ENCODE measurements at regions of chr3 and their contacts with region 1.

Region 1: DNA sequence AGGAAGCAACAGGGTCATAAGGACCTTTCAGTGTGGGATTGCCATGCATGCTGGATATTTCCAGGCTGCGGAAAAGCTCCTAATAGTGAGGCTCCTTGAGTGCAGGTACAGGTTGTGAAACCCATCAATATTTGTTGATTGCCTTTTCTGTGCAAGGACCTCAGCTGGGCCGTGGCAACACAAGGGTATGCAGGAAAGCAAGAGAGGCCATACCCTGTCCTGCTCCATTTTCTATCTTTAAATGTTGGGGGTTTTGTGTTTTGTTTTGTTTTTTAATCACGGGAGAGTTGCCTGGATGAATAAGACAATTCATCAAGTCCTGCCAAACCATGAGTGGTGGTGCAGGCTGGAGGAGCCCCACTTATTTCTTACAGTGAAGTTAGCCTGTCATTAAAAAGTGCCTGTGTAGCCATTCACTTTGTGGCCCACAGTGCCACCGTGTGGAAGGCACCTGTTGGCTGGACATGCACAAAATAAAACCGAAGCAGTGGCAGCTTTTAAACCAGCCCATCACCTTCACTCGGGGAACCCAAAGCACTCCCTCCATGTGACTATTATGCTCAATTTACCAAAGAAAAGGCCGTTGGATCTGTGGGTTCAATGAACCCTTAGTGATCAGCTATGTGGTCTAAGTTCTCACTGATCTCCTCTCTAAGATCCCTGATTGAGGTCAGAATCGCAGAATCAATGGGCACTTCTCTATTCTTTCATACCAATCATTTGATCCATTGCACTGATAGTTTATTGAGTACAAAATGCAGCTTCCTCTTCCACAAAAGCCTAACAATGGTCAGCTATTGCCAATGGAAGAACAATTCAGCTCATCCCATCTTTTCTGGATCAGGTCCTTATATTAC is 42.2 kb downstream of the CLDN18 start:
- DNase-seq: peak; percentile 34
- H3K4me3 ChIP-seq: no peak overlapping the region
- H3K27ac ChIP-seq: no peak overlapping the region
- H3K4me1 ChIP-seq: no peaks in the 10 kb centered on the region; a peak in 1 of 4 replicates
- H3K27me3 ChIP-seq: no peaks in the 10 kb centered on the region
- CTCF ChIP-seq: peak; percentile 72
- EP300 ChIP-seq: no peak
- RAD21 ChIP-seq: peak; percentile 70

Region 2: DNA sequence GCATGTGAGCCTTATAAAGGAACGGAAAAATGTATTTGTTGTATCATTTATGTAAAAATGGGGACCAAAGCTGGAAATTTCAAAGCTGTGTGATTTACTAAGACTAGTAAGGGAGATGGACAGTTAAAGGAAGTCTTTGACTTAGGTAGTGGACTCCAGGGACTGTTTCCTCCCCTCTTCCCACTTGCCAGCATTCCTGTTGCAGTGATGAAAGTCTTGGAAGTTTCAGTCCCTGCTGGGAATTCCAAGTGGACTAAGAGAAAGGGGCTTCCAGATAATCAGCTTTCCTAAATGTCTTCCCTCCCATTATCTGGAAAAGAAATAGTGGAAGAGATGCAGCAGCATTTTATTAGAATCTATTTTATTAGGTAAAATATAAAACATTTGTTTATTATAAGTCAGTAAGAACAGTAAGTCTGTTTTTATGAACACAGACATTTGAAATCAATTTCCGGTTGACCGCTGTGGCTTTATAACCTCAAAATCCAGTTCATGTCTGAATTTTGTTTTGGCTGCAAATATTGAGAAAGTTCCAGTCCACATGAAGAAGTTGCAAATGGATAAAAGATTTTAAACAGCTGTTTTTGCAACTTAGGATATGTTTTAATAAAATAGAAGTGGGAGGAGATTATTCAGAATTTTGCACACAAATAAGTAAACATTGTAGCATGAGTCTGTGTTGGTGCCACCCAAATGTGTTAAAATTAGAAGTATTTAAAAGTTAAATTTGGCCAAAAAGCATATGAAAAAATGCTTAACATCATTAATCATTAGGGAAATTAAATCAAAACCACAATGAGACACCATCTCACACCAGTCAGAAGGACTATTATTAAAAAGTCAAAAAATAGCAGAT is 952.6 kb before region 1 on chr3:
- CTCF ChIA-PET with region 1: interaction called, 16 read pairs
- POLR2A ChIA-PET with region 1: no interaction called
- DNase-seq: no peak
- H3K4me3 ChIP-seq: no peak overlapping the region
- H3K27ac ChIP-seq: no peak overlapping the region
- H3K4me1 ChIP-seq: no peaks in the 10 kb centered on the region
- H3K27me3 ChIP-seq: no peaks in the 10 kb centered on the region
- CTCF ChIP-seq: no peak
- EP300 ChIP-seq: no peak
- RAD21 ChIP-seq: no peak

Region 3: DNA sequence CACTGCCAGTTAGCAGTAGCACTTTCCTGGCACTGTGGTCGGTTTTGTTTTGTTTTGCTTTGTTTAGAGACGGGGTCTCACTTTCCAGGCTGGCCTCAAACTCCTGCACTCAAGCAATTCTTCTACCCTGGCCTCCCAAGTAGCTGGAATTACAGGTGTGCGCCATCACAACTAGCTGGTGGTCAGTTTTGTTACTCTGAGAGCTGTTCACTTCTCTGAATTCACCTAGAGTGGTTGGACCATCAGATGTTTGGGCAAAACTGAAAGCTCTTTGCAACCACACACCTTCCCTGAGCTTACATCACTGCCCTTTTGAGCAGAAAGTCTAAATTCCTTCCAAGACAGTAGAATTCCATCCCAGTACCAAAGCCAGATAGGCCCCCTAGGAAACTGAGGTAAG is 19.6 kb before region 1 on chr3:
- CTCF ChIA-PET with region 1: interaction called, 14 read pairs
- POLR2A ChIA-PET with region 1: no interaction called
- DNase-seq: no peak
- H3K4me3 ChIP-seq: no peak overlapping the region
- H3K27ac ChIP-seq: no peak overlapping the region
- H3K4me1 ChIP-seq: no peaks in the 10 kb centered on the region
- H3K27me3 ChIP-seq: no peaks in the 10 kb centered on the region
- CTCF ChIP-seq: no peak
- EP300 ChIP-seq: no peak
- RAD21 ChIP-seq: no peak

Region 4: DNA sequence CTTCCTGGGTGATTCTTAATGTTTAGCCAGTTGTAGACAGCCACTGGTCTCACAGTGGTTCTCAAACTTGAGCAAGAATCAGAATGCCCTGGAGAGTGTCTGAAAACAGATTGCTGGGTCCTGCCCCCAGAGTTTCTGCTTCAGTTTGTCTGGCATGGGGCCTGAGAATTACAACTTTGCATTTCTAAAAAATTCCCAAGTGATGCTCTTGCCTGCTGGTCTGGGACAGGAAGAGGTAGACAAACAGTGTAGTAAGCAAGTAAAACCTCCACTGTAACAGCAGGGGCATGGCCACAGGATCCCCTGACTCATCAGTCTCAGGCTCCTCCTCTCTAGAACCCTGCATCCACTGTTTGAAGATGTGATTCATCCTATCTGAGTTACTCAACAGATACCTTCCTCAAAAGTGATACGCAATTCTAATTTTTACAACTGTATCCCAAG is 26.7 kb after region 1 on chr3:
- CTCF ChIA-PET with region 1: no interaction called
- POLR2A ChIA-PET with region 1: no interaction called
- DNase-seq: no peak
- H3K4me3 ChIP-seq: no peak overlapping the region
- H3K27ac ChIP-seq: peak overlapping the region; percentile 22 to 94; a peak in 3 of 4 replicates
- H3K4me1 ChIP-seq: peaks cover 0 to 48% of the 10 kb centered on the region in 2 experiments
- H3K27me3 ChIP-seq: no peaks in the 10 kb centered on the region
- CTCF ChIP-seq: no peak
- EP300 ChIP-seq: no peak; a peak in 1 of 4 replicates
- RAD21 ChIP-seq: no peak

Region 5: GRCh38 chr3:138300647-138301046 is 248.5 kb after region 1 on chr3:
- CTCF ChIA-PET with region 1: no interaction called
- POLR2A ChIA-PET with region 1: no interaction called
- DNase-seq: peak; percentile 13
- H3K4me3 ChIP-seq: no peak overlapping the region
- H3K27ac ChIP-seq: no peak overlapping the region
- H3K4me1 ChIP-seq: no peaks in the 10 kb centered on the region; a peak in 1 of 4 replicates
- H3K27me3 ChIP-seq: no peaks in the 10 kb centered on the region
- CTCF ChIP-seq: no peak
- EP300 ChIP-seq: no peak
- RAD21 ChIP-seq: no peak

Measured in SK-N-SH (cell line).